ENCODE measurements at regions of chr5 and their contacts with region 1.

Region 1: GRCh38 chr5:115948091-115948534 is 14.2 kb upstream of the LVRN start:
- DNase-seq: no peak
- H3K4me3 ChIP-seq: no peak overlapping the region
- H3K27ac ChIP-seq: no peak overlapping the region
- H3K4me1 ChIP-seq: no peaks in the 10 kb centered on the region; a peak in 1 of 7 replicates
- H3K27me3 ChIP-seq: no peaks in the 10 kb centered on the region
- CTCF ChIP-seq: no peak
- EP300 ChIP-seq: no peak
- POLR2A ChIP-seq: no peak
- RAD21 ChIP-seq: no peak

Region 2: DNA sequence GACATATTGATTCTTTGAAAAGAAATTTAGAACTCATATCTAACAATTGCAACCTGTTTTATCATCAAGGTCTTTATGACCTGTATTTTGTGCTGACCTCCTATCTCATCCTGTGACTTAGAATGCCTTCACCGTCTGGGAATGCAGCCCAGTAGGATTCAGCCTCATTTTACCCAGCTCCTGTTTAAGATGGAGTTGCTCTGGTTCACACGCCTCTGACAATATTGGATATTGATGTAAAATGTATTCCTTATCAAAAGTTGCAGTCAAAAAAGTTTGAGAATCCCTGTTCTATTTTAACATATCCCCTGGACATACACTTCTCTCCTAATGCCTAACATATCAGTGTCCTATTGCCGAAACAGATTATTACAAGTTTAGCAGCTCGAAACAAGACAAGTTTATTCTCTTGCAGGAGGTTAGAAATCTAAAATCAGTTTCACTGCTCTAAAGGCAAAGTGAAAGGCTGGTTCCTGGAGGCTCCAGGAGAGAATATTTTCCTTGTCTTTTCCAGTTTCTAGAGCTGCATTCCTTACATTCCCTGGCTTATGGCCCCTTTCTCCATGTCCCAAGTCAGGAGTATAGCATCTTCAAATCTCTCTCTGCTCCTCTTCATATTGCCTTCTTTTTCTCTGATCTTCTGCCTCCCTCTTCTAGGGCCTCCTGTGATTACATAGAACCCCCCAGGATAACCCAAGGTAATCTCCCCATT is 17.3 kb before region 1 on chr5:
- CTCF ChIA-PET with region 1: interaction called, 16 read pairs
- POLR2A ChIA-PET with region 1: no interaction called
- DNase-seq: no peak
- H3K4me3 ChIP-seq: no peak overlapping the region
- H3K27ac ChIP-seq: no peak overlapping the region
- H3K4me1 ChIP-seq: no peaks in the 10 kb centered on the region
- H3K27me3 ChIP-seq: no peaks in the 10 kb centered on the region
- CTCF ChIP-seq: no peak
- EP300 ChIP-seq: no peak
- POLR2A ChIP-seq: no peak
- RAD21 ChIP-seq: no peak

Region 3: GRCh38 chr5:115962503-115963402 is 14.6 kb after region 1 on chr5:
- CTCF ChIA-PET with region 1: interaction called, 15 read pairs
- POLR2A ChIA-PET with region 1: no interaction called
- DNase-seq: peak in 1 of 2 experiments; percentile 55
- H3K4me3 ChIP-seq: peak overlapping the region; percentile 24 to 54 (median 40)
- H3K27ac ChIP-seq: no peak overlapping the region
- H3K4me1 ChIP-seq: peaks cover 0 to 8% (median under 1%) of the 10 kb centered on the region in 4 experiments; a peak in 4 of 7 replicates
- H3K27me3 ChIP-seq: peaks cover 18 to 49% (median 36%) of the 10 kb centered on the region in 4 experiments
- CTCF ChIP-seq: no peak
- EP300 ChIP-seq: no peak
- POLR2A ChIP-seq: no peak
- RAD21 ChIP-seq: no peak